Naive thymus-derived CD4-positive, alpha-beta T cell (primary cell): ENCODE measurements at regions of chr14 and their contacts with region 1.

Region 1: GRCh38 chr14:31561155-31561846 is at the start of gene NUBPL:
- DNase-seq: peak; percentile 96 to 98 (median 97)
- ATAC-seq: peak; percentile 95
- H3K4me3 ChIP-seq: peak within 1 kb of the TSS; percentile 90
- H3K4me3 Mint-ChIP-seq: peak within 1 kb of the TSS; percentile 88 to 98 (median 96)
- H3K27ac ChIP-seq: peak within 1 kb of the TSS; percentile 81
- H3K27ac Mint-ChIP-seq: peak within 1 kb of the TSS; percentile 95 to 100 (median 99)
- H3K4me1 ChIP-seq: peaks cover 0 to 5% of the 10 kb centered on the region in 2 donors
- H3K4me1 Mint-ChIP-seq: peaks cover 24 to 44% (median 38%) of the 10 kb centered on the region in 7 donors
- H3K27me3 ChIP-seq: no peaks in the 10 kb centered on the region
- H3K27me3 Mint-ChIP-seq: peaks cover 0 to 11% (median 5%) of the 10 kb centered on the region in 5 donors
- total RNA-seq, gene NUBPL: 6.1 to 11.7 (median 8.3) TPM

Region 2: GRCh38 chr14:30621940-30622830 is 939.1 kb before region 1 on chr14 and contains the start of gene SCFD1:
- CTCF ChIA-PET with region 1: no interaction called
- POLR2A ChIA-PET with region 1: no interaction called
- intact Hi-C with region 1: loop called (anchors 1 to 10 kb)
- DNase-seq: peak; percentile 86 to 94 (median 91)
- ATAC-seq: peak; percentile 99
- H3K4me3 ChIP-seq: peak within 1 kb of the TSS; percentile 97
- H3K4me3 Mint-ChIP-seq: peak within 1 kb of the TSS; percentile 95 to 100 (median 97)
- H3K27ac ChIP-seq: peak within 1 kb of the TSS; percentile 86
- H3K27ac Mint-ChIP-seq: peak within 1 kb of the TSS; percentile 86 to 98 (median 95)
- H3K4me1 ChIP-seq: peaks cover 14 to 26% of the 10 kb centered on the region in 2 donors
- H3K4me1 Mint-ChIP-seq: peaks cover 14 to 58% (median 44%) of the 10 kb centered on the region in 7 donors
- H3K27me3 ChIP-seq: no peaks in the 10 kb centered on the region
- H3K27me3 Mint-ChIP-seq: no peaks in the 10 kb centered on the region
- total RNA-seq, gene SCFD1: 63.2 to 75.4 (median 68.2) TPM

Region 3: DNA sequence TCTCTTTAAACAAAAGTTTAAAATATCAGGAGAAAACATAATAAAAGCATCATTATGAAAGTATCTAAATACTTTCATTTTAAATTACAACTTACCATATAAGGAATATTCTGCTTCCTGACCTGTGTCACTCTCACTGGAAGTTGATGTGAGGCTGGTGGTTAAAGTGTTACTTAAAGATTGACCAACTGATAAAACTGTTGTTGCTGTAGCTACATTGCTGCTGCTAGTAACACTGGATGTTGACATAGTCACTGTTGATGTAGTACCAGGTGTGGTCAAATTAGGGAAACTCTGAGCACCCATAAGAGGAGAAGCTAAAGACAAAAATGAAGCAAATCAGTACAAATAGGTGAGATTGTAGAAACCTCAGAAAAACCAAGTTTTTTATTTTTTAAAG is 433.6 kb before region 1 on chr14:
- CTCF ChIA-PET with region 1: no interaction called
- POLR2A ChIA-PET with region 1: no interaction called
- intact Hi-C with region 1: loop called in 1 of 2 experiments (anchors 5 kb)
- DNase-seq: peak in 5 of 9 donors; percentile 2 to 42 (median 27)
- ATAC-seq: peak; percentile 91
- H3K4me3 ChIP-seq: no peak overlapping the region
- H3K4me3 Mint-ChIP-seq: peak overlapping the region in 3 of 10 donors; percentile 7 to 67 (median 18)
- H3K27ac ChIP-seq: no peak overlapping the region
- H3K27ac Mint-ChIP-seq: peak overlapping the region in 5 of 9 donors; percentile 11 to 75 (median 52)
- H3K4me1 ChIP-seq: peaks cover 9 to 30% of the 10 kb centered on the region in 2 donors
- H3K4me1 Mint-ChIP-seq: peaks cover 16 to 47% (median 39%) of the 10 kb centered on the region in 7 donors
- H3K27me3 ChIP-seq: no peaks in the 10 kb centered on the region
- H3K27me3 Mint-ChIP-seq: peaks cover 0 to 2% (median 0%) of the 10 kb centered on the region in 5 donors

Region 4: GRCh38 chr14:31456841-31457664 is 104.2 kb before region 1 on chr14 and contains the start of gene DTD2:
- CTCF ChIA-PET with region 1: interaction called, 3 read pairs
- POLR2A ChIA-PET with region 1: interaction called, 3 read pairs
- intact Hi-C with region 1: loop called (anchors 1 kb)
- DNase-seq: peak; percentile 80 to 89 (median 86)
- ATAC-seq: peak; percentile 99
- H3K4me3 ChIP-seq: peak within 1 kb of the TSS; percentile 82
- H3K4me3 Mint-ChIP-seq: peak within 1 kb of the TSS; percentile 92 to 98 (median 96)
- H3K27ac ChIP-seq: peak within 1 kb of the TSS; percentile 77
- H3K27ac Mint-ChIP-seq: peak within 1 kb of the TSS; percentile 89 to 98 (median 95)
- H3K4me1 ChIP-seq: peaks cover 6% of the 10 kb centered on the region in 2 donors
- H3K4me1 Mint-ChIP-seq: peaks cover 14 to 48% (median 40%) of the 10 kb centered on the region in 7 donors
- H3K27me3 ChIP-seq: no peaks in the 10 kb centered on the region
- H3K27me3 Mint-ChIP-seq: peaks cover 0 to 5% (median 0%) of the 10 kb centered on the region in 5 donors
- total RNA-seq, gene DTD2: 13.4 to 20.2 (median 18.6) TPM

Region 5: DNA sequence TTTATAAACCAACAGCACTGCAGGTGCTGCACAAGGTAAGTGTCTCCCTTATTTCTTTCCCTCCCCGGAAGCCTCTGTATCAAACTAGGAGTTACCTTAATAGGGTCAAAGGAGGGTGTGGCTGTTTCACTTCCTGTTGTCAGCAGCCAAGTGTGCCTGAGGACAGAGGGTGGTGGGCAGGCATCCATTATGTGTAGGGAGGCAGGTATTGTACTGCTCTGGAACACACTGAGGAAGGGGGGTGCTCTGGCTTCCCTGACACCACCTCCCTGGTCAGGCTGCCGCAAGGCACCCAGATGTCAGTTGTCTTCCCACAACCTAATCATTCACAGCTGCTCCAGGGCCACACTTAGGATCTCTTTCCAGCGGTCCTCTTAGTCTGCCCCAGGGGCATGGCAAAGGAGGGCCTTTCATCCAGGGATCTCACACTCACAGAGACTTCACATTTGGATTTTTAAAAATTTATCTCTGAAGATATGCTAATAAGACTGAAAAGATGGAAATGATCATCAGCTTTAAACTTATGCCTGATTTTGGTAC is 383.8 kb after region 1 on chr14:
- CTCF ChIA-PET with region 1: no interaction called
- POLR2A ChIA-PET with region 1: no interaction called
- intact Hi-C with region 1: loop called in 1 of 2 experiments (anchors 2 kb)
- DNase-seq: peak in 8 of 9 donors; percentile 7 to 75 (median 48)
- ATAC-seq: peak; percentile 83
- H3K4me3 ChIP-seq: peak overlapping the region; percentile 29
- H3K4me3 Mint-ChIP-seq: peak overlapping the region in 9 of 10 donors; percentile 30 to 84 (median 71)
- H3K27ac ChIP-seq: peak overlapping the region; percentile 56
- H3K27ac Mint-ChIP-seq: peak overlapping the region; percentile 62 to 94 (median 90)
- H3K4me1 ChIP-seq: peaks cover 10 to 28% of the 10 kb centered on the region in 2 donors
- H3K4me1 Mint-ChIP-seq: peaks cover 21 to 64% (median 33%) of the 10 kb centered on the region in 7 donors
- H3K27me3 ChIP-seq: no peaks in the 10 kb centered on the region
- H3K27me3 Mint-ChIP-seq: peaks cover 0 to 4% (median 0%) of the 10 kb centered on the region in 5 donors

Region 6: DNA sequence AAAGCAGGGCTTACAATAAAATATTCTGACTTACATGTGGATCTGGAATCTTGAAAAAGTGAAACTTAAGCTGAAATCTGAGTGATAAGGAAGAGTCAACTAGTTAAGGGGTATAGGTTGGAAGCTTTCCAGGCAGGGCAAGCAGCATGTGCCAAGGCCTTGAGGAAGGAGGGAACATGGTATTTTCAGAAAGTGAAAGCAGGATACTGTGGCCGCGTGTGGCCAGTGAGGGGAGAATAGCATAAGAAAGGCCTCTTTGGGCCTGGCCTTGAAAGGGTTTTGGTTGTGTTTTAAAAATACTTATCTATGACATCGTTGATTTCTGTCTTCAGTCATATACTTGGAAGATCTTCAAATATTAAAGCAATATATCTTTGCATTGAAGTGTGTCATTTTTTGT is 981.2 kb after region 1 on chr14:
- CTCF ChIA-PET with region 1: no interaction called
- POLR2A ChIA-PET with region 1: no interaction called
- intact Hi-C with region 1: no loop called
- DNase-seq: no peak
- ATAC-seq: no peak
- H3K4me3 ChIP-seq: no peak overlapping the region
- H3K4me3 Mint-ChIP-seq: no peak overlapping the region
- H3K27ac ChIP-seq: no peak overlapping the region
- H3K27ac Mint-ChIP-seq: no peak overlapping the region
- H3K4me1 ChIP-seq: no peaks in the 10 kb centered on the region
- H3K4me1 Mint-ChIP-seq: peaks cover 0 to 3% (median 0%) of the 10 kb centered on the region in 7 donors
- H3K27me3 ChIP-seq: no peaks in the 10 kb centered on the region
- H3K27me3 Mint-ChIP-seq: peaks cover 0 to 2% (median 0%) of the 10 kb centered on the region in 5 donors